Gastrocnemius medialis (tissue), 4 donors: ENCODE measurements at regions of chr7 and their contacts with region 1.

Region 1: GRCh38 chr7:112129655-112130323 is 76.4 kb downstream of the DOCK4 start:
- DNase-seq: peak; percentile 40 to 78
- ATAC-seq: peak; percentile 84 to 96
- H3K4me3 ChIP-seq: no peak overlapping the region
- H3K27ac ChIP-seq: peak overlapping the region; percentile 43 to 78 (median 66)
- H3K4me1 ChIP-seq: peaks cover 48 to 55% of the 10 kb centered on the region in 2 donors
- H3K27me3 ChIP-seq: no peaks in the 10 kb centered on the region
- CTCF ChIP-seq: no peak
- POLR2A ChIP-seq: no peak

Region 2: GRCh38 chr7:112022128-112022527 is 107.7 kb before region 1 on chr7:
- in situ Hi-C with region 1: no loop called
- intact Hi-C with region 1: no loop called
- DNase-seq: no peak
- ATAC-seq: no peak
- H3K4me3 ChIP-seq: no peak overlapping the region
- H3K27ac ChIP-seq: no peak overlapping the region
- H3K4me1 ChIP-seq: peaks cover 0 to 26% of the 10 kb centered on the region in 2 donors
- H3K27me3 ChIP-seq: no peaks in the 10 kb centered on the region
- CTCF ChIP-seq: no peak
- POLR2A ChIP-seq: no peak

Region 3: DNA sequence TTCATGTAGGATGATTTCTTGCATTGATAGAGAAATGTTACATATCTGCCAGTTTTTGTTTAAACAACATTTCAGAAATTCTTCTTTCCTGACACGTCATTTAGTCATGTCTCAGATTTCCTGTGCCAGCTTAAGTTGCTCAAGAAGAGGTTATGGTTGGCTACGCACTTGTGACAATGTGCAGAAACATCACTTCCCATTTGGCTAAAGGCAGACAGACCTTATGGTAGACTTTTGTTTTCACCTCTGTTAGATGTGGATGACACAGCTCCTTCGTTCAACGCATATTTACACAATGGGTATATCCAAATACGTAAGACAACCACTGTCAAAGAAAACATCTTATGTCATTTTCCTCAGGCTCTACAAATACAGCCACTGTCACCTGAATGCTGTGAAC is 49.3 kb before region 1 on chr7:
- in situ Hi-C with region 1: no loop called
- intact Hi-C with region 1: loop called (anchors 5 kb)
- DNase-seq: peak; percentile 9 to 23
- ATAC-seq: peak; percentile 55 to 63
- H3K4me3 ChIP-seq: peak overlapping the region in 1 of 4 donors; percentile 6
- H3K27ac ChIP-seq: peak overlapping the region in 3 of 4 donors; percentile 18 to 32 (median 20)
- H3K4me1 ChIP-seq: peaks cover 0 to 30% of the 10 kb centered on the region in 2 donors
- H3K27me3 ChIP-seq: no peaks in the 10 kb centered on the region
- CTCF ChIP-seq: no peak
- POLR2A ChIP-seq: no peak

Region 4: GRCh38 chr7:112538726-112539255 is 409.0 kb after region 1 on chr7:
- in situ Hi-C with region 1: no loop called
- intact Hi-C with region 1: no loop called
- DNase-seq: no peak
- ATAC-seq: no peak
- H3K4me3 ChIP-seq: no peak overlapping the region
- H3K27ac ChIP-seq: no peak overlapping the region
- H3K4me1 ChIP-seq: no peaks in the 10 kb centered on the region
- H3K27me3 ChIP-seq: no peaks in the 10 kb centered on the region
- CTCF ChIP-seq: no peak
- POLR2A ChIP-seq: no peak